ENCODE measurements at regions of chr18 and their contacts with region 1.

Region 1: DNA sequence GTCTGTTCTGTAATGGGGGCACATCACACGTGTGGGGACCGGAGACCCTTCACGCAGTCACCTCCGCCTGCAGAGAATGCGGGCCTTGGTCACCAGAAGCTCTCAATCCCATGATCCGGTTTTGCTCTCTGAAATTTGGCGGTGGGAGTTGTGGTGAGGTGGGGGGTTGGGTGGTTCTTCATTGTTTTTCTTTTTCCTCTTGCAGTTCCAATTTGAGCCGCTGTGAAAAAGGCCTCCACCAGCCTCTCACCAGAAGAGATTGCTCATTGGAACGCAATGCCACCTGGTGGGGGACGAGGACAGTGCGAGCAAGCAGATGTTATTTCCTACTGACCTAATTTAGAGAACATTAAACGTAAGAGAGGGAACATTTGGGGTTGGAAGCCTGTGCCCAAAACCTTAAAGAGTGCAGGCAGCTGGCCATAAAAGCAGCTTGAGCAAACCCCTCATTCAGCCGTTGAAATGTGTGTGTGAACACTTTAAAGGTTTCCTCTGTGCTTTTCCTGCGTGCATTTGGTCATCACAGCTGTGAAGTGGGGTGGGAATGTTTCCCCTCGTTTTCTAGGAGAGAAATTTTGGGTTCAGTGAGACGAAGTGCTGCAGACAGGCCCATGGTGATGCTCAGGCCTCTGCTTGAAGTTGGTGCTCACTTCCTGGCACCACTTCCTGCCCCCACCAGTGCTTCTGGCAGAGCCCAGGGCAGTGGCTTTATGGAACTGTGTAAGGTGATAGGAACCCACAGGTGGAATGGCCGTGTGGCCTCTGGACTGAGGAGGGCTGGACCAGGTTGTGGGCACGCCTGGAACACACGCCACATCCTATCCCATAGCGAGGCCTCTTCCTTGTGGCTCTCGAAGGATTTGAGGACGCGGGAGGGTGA is 61.7 kb downstream of the ZCCHC2 start:
- DNase-seq: peak; percentile 87 to 97 (median 93)
- H3K4me3 ChIP-seq: no peak overlapping the region
- H3K27ac ChIP-seq: no peak overlapping the region
- H3K4me1 ChIP-seq: peaks cover 0 to 12% of the 10 kb centered on the region in 2 donors
- H3K27me3 ChIP-seq: no peaks in the 10 kb centered on the region
- CTCF ChIP-seq: peak; percentile 97 to 100 (median 99)
- POLR2A ChIP-seq: no peak

Region 2: GRCh38 chr18:62324917-62325805 is 259.3 kb before region 1 on chr18 and contains the start of gene TNFRSF11A:
- intact Hi-C with region 1: loop called in 1 of 2 experiments (anchors 10 kb)
- DNase-seq: peak in 4 of 7 donors; percentile 37 to 48 (median 41)
- H3K4me3 ChIP-seq: peak within 1 kb of the TSS in 2 of 4 donors; percentile 10 to 62
- H3K27ac ChIP-seq: no peak within 1 kb of the TSS
- H3K4me1 ChIP-seq: peaks cover 9 to 19% of the 10 kb centered on the region in 2 donors
- H3K27me3 ChIP-seq: peaks cover 43% of the 10 kb centered on the region
- CTCF ChIP-seq: peak in 2 of 6 experiments; percentile 25 to 30
- POLR2A ChIP-seq: no peak
- total RNA-seq, gene TNFRSF11A: 0.61 to 15.7 (median 5.4) TPM

Region 3: GRCh38 chr18:62425465-62426195 is 158.9 kb before region 1 on chr18:
- intact Hi-C with region 1: loop called (anchors 5 kb)
- DNase-seq: peak; percentile 88 to 95 (median 91)
- H3K4me3 ChIP-seq: peak overlapping the region in 2 of 4 donors; percentile 32 to 43
- H3K27ac ChIP-seq: peak overlapping the region; percentile 5 to 79 (median 73)
- H3K4me1 ChIP-seq: peaks cover 0 to 10% of the 10 kb centered on the region in 2 donors
- H3K27me3 ChIP-seq: no peaks in the 10 kb centered on the region
- CTCF ChIP-seq: peak; percentile 74 to 97 (median 90)
- POLR2A ChIP-seq: no peak

Region 4: DNA sequence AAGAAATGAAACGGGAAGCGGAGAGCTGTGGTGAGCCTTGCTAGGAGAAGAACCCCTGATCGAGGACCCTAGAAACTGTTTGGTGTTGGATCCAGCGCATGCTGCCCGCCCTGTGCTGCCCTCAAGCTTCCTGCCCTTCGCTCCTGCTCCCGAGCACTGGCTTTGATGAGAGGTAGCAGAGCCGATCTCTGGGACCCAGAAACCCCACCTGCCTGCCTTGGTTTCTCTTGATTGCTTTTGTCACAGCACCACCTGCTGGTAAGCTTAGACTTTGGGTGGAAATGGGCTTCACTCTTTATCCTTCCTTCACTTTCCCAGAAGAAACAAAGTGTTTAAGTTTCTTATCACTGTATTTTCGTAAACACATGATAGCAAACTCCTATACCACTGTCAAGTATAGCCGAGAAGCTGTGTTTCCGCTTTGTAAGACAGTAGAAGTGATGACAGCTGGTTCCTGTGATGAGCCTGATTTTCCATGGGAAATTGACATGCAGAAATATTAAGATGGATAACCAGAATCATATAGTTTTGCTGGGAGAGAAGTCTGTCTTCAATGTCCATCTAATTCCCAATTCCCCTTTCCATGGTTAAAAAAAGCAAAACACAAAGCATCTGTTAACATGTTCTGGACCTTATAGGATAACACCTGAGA is 398.2 kb after region 1 on chr18:
- intact Hi-C with region 1: loop called (anchors 5 to 10 kb)
- DNase-seq: peak; percentile 56 to 82 (median 66)
- H3K4me3 ChIP-seq: peak overlapping the region in 1 of 4 donors; percentile 34
- H3K27ac ChIP-seq: no peak overlapping the region
- H3K4me1 ChIP-seq: peaks cover 3 to 7% of the 10 kb centered on the region in 2 donors
- H3K27me3 ChIP-seq: no peaks in the 10 kb centered on the region
- CTCF ChIP-seq: peak; percentile 58 to 82 (median 78)
- POLR2A ChIP-seq: no peak